ENCODE measurements at regions of chr9 and their contacts with region 1.

Region 1: GRCh38 chr9:35553670-35554543 is 51.2 kb upstream of the TESK1 start:
- DNase-seq: peak; percentile 92
- H3K4me3 ChIP-seq: peak overlapping the region in 1 of 4 donors; percentile 1
- H3K27ac ChIP-seq: peak overlapping the region; percentile 75 to 86 (median 79)
- H3K4me1 ChIP-seq: peaks cover 0 to 47% (median 40%) of the 10 kb centered on the region in 4 donors
- H3K27me3 ChIP-seq: no peaks in the 10 kb centered on the region
- CTCF ChIP-seq: peak; percentile 87 to 93 (median 90)
- EP300 ChIP-seq: no peak
- POLR2A ChIP-seq: no peak

Region 2: DNA sequence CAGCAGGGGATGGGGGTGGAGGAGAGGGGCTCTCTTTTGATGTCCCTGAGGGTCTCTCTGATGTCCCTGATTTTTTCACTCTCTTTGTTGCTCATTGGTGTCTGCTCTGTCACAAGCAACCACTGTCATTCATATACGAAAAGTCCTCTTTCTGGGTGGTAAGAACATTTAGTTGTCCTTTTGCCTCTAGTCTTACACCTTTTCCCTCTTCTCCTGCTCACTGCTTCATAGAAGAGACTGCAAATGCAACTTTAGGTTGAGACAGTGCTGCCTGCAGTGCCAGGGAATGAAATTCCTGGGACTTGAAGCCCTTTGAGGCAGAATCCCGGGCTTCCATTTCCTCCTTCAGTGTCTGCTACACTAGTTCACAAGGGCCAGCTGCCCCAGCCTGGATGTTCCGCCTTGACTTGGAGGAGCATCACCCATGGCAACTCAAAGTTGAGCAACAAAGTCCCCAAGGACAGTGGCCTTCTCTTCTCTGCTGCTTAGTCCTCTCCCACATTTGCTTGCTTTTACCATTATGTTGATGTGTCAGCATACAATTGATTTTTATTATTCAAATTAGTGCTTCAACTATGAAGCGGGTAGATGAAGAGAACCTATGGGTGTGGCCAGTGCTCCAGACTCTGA is 158.7 kb before region 1 on chr9:
- intact Hi-C with region 1: loop called (anchors 10 kb)
- DNase-seq: no peak
- H3K4me3 ChIP-seq: no peak overlapping the region
- H3K27ac ChIP-seq: no peak overlapping the region
- H3K4me1 ChIP-seq: no peaks in the 10 kb centered on the region
- H3K27me3 ChIP-seq: no peaks in the 10 kb centered on the region
- CTCF ChIP-seq: no peak
- EP300 ChIP-seq: no peak
- POLR2A ChIP-seq: no peak

Region 3: DNA sequence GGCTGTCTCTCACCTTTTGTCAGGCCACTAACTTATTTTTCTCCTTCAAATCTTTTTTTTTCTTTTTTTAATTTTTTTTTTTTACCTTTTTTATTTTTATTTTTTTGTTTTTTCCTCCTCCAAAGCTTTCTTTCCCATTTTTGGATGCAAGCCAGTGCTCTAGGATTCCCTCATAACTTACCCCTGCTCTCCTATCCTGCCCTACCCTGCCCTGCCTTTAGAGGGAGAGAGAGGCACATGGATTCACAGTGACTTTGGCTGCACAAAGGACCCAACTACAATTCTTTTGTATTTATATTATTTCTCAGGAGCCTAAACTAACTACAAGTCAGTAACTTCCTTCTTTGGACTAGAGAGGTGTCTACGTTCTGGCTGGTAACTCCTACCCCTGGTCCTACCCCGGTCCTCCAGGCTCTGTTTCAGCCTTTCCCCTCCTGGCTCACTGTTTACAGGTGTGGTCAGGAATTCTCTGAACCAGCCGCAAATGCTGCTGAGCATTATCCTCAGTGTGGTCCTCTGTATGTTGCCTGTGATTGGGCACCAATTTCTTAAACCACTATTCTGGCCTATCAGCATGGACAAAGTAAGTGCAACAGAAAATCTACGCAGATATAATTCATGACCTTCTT is 72.4 kb before region 1 on chr9:
- intact Hi-C with region 1: loop called (anchors 1 kb)
- DNase-seq: peak; percentile 79
- H3K4me3 ChIP-seq: no peak overlapping the region
- H3K27ac ChIP-seq: no peak overlapping the region
- H3K4me1 ChIP-seq: no peaks in the 10 kb centered on the region
- H3K27me3 ChIP-seq: no peaks in the 10 kb centered on the region
- CTCF ChIP-seq: peak; percentile 56 to 74 (median 64)
- EP300 ChIP-seq: no peak
- POLR2A ChIP-seq: no peak